ENCODE measurements at regions of chr5 and their contacts with region 1.

Region 1: DNA sequence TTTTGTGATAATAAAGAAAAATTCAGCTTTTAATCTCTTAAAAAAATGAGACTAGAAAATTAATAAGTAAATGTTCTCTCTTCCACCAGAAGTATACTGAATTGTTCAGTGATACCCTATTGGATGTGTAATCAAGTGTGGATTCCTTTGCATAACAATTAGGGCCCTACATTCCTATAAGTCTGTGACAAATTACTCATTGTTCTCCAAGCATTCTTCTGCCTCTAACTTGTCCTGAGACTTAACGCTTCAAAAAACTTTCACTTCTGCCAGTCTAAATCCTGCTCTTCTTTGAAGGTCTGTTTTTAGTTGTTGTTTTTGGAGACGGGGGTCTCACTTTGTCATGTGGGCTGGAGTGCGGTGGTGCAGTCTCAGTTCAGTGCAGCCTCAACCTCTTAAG is 9.2 kb upstream of the DDX46 start:
- DNase-seq: no peak
- H3K4me3 ChIP-seq: no peak overlapping the region
- H3K27ac ChIP-seq: no peak overlapping the region
- H3K4me1 ChIP-seq: no peaks in the 10 kb centered on the region
- H3K27me3 ChIP-seq: no peaks in the 10 kb centered on the region
- CTCF ChIP-seq: no peak

Region 2: GRCh38 chr5:134794082-134794481 is 44.7 kb after region 1 on chr5:
- CTCF ChIA-PET with region 1: no interaction called
- POLR2A ChIA-PET with region 1: interaction called, 10 read pairs
- intact Hi-C with region 1: no loop called
- DNase-seq: no peak
- H3K4me3 ChIP-seq: no peak overlapping the region
- H3K27ac ChIP-seq: no peak overlapping the region
- H3K4me1 ChIP-seq: no peaks in the 10 kb centered on the region
- H3K27me3 ChIP-seq: no peaks in the 10 kb centered on the region
- CTCF ChIP-seq: no peak

Measured in PC-9 (cell line).